ENCODE measurements at regions of chr11 and their contacts with region 1.

Region 1: GRCh38 chr11:65274735-65275682 is 13.2 kb downstream of the POLA2 start:
- DNase-seq: peak; percentile 91 to 93
- H3K4me3 ChIP-seq: no peak overlapping the region; the same call in 1 of the 2 replicates
- H3K4me3 Mint-ChIP-seq: peak overlapping the region; percentile 63
- H3K27ac Mint-ChIP-seq: peak overlapping the region; percentile 90
- H3K4me1 ChIP-seq: peaks cover 42% of the 10 kb centered on the region
- H3K4me1 Mint-ChIP-seq: peaks cover 40% of the 10 kb centered on the region
- H3K27me3 ChIP-seq: no peaks in the 10 kb centered on the region
- H3K27me3 Mint-ChIP-seq: no peaks in the 10 kb centered on the region
- CTCF ChIP-seq: peak; percentile 79 to 81

Region 2: DNA sequence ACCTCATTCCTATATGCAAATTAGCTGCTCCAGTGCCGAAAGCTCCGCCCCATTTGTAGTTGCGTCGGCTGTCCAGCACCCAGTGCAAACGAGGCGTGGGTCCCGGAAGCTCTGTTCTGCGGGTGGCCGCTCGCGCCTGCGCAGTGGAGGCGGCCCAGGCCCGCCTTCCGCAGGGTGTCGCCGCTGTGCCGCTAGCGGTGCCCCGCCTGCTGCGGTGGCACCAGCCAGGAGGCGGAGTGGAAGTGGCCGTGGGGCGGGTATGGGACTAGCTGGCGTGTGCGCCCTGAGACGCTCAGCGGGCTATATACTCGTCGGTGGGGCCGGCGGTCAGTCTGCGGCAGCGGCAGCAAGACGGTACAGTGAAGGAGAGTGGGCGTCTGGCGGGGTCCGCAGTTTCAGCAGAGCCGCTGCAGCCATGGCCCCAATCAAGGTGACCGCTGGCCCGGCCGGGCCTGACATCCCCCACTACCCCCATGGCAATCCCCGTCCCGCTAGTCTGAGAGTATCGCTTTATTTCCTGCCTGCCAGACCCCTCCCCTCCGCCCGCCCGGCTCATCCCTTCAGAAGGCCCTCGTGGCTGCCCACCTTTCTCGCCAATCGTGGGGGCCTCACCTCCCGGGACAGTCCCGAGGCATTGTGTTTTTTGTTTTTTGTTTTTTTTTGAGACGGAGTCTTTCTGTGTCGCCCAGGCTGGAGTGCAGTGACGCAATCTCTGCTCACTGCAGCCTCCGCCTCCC is 956.9 kb before region 1 on chr11 and contains the start of gene PRDX5:
- CTCF ChIA-PET with region 1: interaction called, 11 read pairs
- POLR2A ChIA-PET with region 1: no interaction called
- intact Hi-C with region 1: no loop called
- DNase-seq: peak; percentile 98
- H3K4me3 ChIP-seq: peak within 1 kb of the TSS; percentile 70
- H3K4me3 Mint-ChIP-seq: peak within 1 kb of the TSS; percentile 84
- H3K27ac Mint-ChIP-seq: peak within 1 kb of the TSS; percentile 97
- H3K4me1 ChIP-seq: peaks cover 21% of the 10 kb centered on the region
- H3K4me1 Mint-ChIP-seq: peaks cover 28% of the 10 kb centered on the region
- H3K27me3 ChIP-seq: no peaks in the 10 kb centered on the region
- H3K27me3 Mint-ChIP-seq: no peaks in the 10 kb centered on the region
- CTCF ChIP-seq: peak in 1 of 2 experiments; percentile 56
- total RNA-seq, gene PRDX5: 269 and 306 TPM in 2 replicates

Region 3: DNA sequence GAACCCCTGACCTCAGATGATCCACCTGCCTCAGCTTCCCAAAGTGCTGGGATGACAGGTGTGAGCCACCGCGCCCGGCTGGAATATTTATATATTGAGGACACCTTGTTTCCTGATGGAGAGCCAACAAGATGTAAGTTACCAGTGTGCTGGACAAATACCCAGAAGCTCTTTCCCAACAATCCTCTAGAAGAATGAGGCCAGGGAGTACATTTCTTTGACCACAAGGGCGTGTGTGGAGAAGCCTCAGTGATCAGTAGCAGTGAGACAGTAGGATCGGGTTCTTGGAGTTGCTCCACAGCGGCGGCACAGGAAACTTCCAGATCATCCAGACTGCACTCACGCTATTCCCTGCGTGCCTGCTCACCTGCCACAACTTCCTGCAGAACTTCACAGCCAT is 23.5 kb before region 1 on chr11:
- CTCF ChIA-PET with region 1: interaction called, 13 read pairs
- POLR2A ChIA-PET with region 1: interaction called, 9 read pairs
- intact Hi-C with region 1: no loop called
- DNase-seq: no peak
- H3K4me3 ChIP-seq: no peak overlapping the region
- H3K4me3 Mint-ChIP-seq: no peak overlapping the region
- H3K27ac Mint-ChIP-seq: no peak overlapping the region
- H3K4me1 ChIP-seq: peaks cover 12% of the 10 kb centered on the region
- H3K4me1 Mint-ChIP-seq: peaks cover 3% of the 10 kb centered on the region
- H3K27me3 ChIP-seq: no peaks in the 10 kb centered on the region
- H3K27me3 Mint-ChIP-seq: no peaks in the 10 kb centered on the region
- CTCF ChIP-seq: no peak

Region 4: GRCh38 chr11:65301491-65302329 is 26.7 kb after region 1 on chr11:
- CTCF ChIA-PET with region 1: interaction called, 21 read pairs
- POLR2A ChIA-PET with region 1: interaction called, 15 read pairs
- intact Hi-C with region 1: loop called (anchors 1 kb)
- DNase-seq: peak; percentile 73 to 77
- H3K4me3 ChIP-seq: no peak overlapping the region
- H3K4me3 Mint-ChIP-seq: peak overlapping the region; percentile 44
- H3K27ac Mint-ChIP-seq: peak overlapping the region; percentile 89
- H3K4me1 ChIP-seq: peaks cover 55% of the 10 kb centered on the region
- H3K4me1 Mint-ChIP-seq: peaks cover 29% of the 10 kb centered on the region
- H3K27me3 ChIP-seq: no peaks in the 10 kb centered on the region
- H3K27me3 Mint-ChIP-seq: no peaks in the 10 kb centered on the region
- CTCF ChIP-seq: no peak

Region 5: DNA sequence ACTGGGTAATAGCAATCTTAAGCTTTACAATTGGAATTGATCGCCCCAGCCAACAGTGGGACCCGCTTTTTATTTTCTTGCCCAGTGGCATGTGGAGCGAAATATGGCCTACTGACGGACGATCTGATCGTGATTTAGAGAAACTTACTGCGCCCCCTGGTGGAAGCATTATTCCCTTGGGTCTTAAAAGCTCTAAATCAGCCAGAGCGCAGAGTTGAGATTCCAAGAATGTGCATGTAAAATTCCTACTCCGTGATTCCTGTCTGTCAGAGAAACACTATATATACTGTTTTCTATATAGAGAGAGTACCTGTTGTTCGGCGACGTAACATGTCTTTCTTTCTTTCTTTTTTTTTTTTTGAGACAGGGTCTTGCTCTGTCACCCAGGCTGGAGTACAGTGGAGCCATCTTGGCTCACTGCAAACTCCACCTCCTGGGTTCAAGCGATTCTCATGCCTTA is 55.0 kb after region 1 on chr11:
- CTCF ChIA-PET with region 1: interaction called, 148 read pairs
- POLR2A ChIA-PET with region 1: interaction called, 32 read pairs
- intact Hi-C with region 1: loop called (anchors 1 kb)
- DNase-seq: peak; percentile 87 to 89
- H3K4me3 ChIP-seq: no peak overlapping the region
- H3K4me3 Mint-ChIP-seq: no peak overlapping the region
- H3K27ac Mint-ChIP-seq: peak overlapping the region; percentile 3
- H3K4me1 ChIP-seq: peaks cover 9% of the 10 kb centered on the region; the same call in 1 of the 2 replicates
- H3K4me1 Mint-ChIP-seq: peaks cover 8% of the 10 kb centered on the region
- H3K27me3 ChIP-seq: no peaks in the 10 kb centered on the region
- H3K27me3 Mint-ChIP-seq: no peaks in the 10 kb centered on the region
- CTCF ChIP-seq: peak; percentile 78 to 86

Region 6: GRCh38 chr11:65418711-65419459 is 143.9 kb after region 1 on chr11:
- CTCF ChIA-PET with region 1: interaction called, 8 read pairs
- POLR2A ChIA-PET with region 1: interaction called, 10 read pairs
- intact Hi-C with region 1: loop called (anchors 5 kb)
- DNase-seq: peak; percentile 96 to 98
- H3K4me3 ChIP-seq: peak overlapping the region; percentile 9
- H3K4me3 Mint-ChIP-seq: peak overlapping the region; percentile 73
- H3K27ac Mint-ChIP-seq: peak overlapping the region; percentile 95
- H3K4me1 ChIP-seq: peaks cover 55% of the 10 kb centered on the region
- H3K4me1 Mint-ChIP-seq: peaks cover 47% of the 10 kb centered on the region
- H3K27me3 ChIP-seq: no peaks in the 10 kb centered on the region
- H3K27me3 Mint-ChIP-seq: peaks cover 5% of the 10 kb centered on the region
- CTCF ChIP-seq: no peak

Measured in Caco-2 (cell line).